Calu3 (cell line): ENCODE measurements at regions of chr9 and their contacts with region 1.

Region 1: GRCh38 chr9:26112724-26113123 is 434.5 kb upstream of the TUSC1 start:
- DNase-seq: no peak
- H3K4me3 Mint-ChIP-seq: no peak overlapping the region
- H3K27ac Mint-ChIP-seq: no peak overlapping the region
- H3K4me1 Mint-ChIP-seq: no peaks in the 10 kb centered on the region
- H3K27me3 Mint-ChIP-seq: no peaks in the 10 kb centered on the region
- CTCF ChIP-seq: no peak

Region 2: DNA sequence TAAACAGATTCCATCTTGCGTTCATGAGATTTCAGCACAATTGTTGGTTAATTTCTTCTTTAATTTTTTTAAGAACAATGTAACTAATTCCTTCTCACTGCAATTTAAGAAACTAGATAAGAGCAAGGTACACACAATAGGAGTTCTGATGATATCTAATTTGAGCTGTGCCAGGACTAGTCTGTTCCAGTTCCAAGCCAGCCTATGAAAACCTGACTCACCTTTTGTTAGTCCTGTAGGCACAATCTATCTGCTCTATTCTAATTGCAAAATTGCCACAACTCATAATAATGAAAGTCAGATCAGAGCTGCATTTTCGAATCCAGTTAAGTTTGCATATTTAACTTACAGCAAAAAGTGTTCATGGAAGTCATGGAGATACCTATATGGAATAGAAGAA is 59.6 kb after region 1 on chr9:
- CTCF ChIA-PET with region 1: interaction called, 10 read pairs
- intact Hi-C with region 1: no loop called
- DNase-seq: no peak
- H3K4me3 Mint-ChIP-seq: no peak overlapping the region
- H3K27ac Mint-ChIP-seq: no peak overlapping the region
- H3K4me1 Mint-ChIP-seq: no peaks in the 10 kb centered on the region
- H3K27me3 Mint-ChIP-seq: no peaks in the 10 kb centered on the region
- CTCF ChIP-seq: no peak